IMR-90 (cell line): ENCODE measurements at regions of chr14 and their contacts with region 1.

Region 1: DNA sequence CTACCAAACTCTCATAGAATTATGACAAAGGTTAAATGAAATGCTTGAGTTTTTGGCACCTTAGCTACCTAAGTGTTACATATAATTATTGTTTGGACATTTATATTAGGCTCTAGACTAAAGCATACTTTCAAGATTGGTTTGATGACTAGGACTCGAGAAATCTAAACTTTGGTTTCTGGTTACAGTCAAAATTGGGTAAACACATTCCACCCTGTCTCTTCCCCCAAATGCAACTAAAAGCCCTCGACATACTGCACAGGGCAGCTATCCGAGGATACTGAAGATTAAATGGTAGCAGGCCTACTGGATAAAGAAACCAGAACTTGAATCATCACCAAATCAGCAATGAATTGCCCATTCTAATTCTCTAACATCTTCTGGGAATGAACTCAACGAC is 369.1 kb downstream of the PRKD1 start:
- DNase-seq: peak; percentile 80
- ATAC-seq: peak; percentile 95
- H3K4me3 ChIP-seq: no peak overlapping the region
- H3K27ac ChIP-seq: peak overlapping the region; percentile 98; the same call in 1 of the 2 replicates
- H3K4me1 ChIP-seq: peaks cover 6% of the 10 kb centered on the region
- H3K27me3 ChIP-seq: no peaks in the 10 kb centered on the region
- CTCF ChIP-seq: no peak
- POLR2A ChIP-seq: no peak
- RAD21 ChIP-seq: no peak

Region 2: DNA sequence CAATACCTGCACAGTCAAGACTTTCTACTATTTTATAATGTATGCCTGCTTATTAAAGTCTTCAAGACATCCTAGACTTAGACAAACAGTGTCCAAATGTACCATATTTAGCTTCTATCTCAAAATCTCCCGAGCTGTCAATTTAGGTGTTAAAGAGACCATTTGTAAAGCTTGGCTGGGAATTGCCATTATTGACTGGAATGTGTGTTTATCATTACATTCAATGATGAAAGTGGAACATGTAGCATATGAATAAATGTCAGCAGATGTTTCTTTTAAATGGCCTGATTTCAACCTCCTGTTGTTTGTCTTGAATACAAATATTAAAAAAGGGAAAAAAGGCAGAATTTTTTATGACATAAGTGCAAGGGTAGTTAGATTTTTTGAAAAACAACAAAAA is 203.2 kb before region 1 on chr14:
- CTCF ChIA-PET with region 1: no interaction called
- POLR2A ChIA-PET with region 1: no interaction called
- dilution Hi-C with region 1: no loop called
- in situ Hi-C with region 1: no loop called
- intact Hi-C with region 1: no loop called
- DNase-seq: no peak
- ATAC-seq: no peak
- H3K4me3 ChIP-seq: no peak overlapping the region
- H3K27ac ChIP-seq: no peak overlapping the region
- H3K4me1 ChIP-seq: no peaks in the 10 kb centered on the region
- H3K27me3 ChIP-seq: no peaks in the 10 kb centered on the region
- CTCF ChIP-seq: no peak
- POLR2A ChIP-seq: no peak
- RAD21 ChIP-seq: no peak

Region 3: GRCh38 chr14:29637411-29637810 is 78.9 kb after region 1 on chr14:
- CTCF ChIA-PET with region 1: no interaction called
- POLR2A ChIA-PET with region 1: no interaction called
- dilution Hi-C with region 1: no loop called
- in situ Hi-C with region 1: no loop called
- intact Hi-C with region 1: no loop called
- DNase-seq: peak; percentile 64
- ATAC-seq: peak; percentile 68
- H3K4me3 ChIP-seq: no peak overlapping the region
- H3K27ac ChIP-seq: no peak overlapping the region
- H3K4me1 ChIP-seq: no peaks in the 10 kb centered on the region
- H3K27me3 ChIP-seq: no peaks in the 10 kb centered on the region
- CTCF ChIP-seq: no peak
- POLR2A ChIP-seq: no peak
- RAD21 ChIP-seq: no peak

Region 4: DNA sequence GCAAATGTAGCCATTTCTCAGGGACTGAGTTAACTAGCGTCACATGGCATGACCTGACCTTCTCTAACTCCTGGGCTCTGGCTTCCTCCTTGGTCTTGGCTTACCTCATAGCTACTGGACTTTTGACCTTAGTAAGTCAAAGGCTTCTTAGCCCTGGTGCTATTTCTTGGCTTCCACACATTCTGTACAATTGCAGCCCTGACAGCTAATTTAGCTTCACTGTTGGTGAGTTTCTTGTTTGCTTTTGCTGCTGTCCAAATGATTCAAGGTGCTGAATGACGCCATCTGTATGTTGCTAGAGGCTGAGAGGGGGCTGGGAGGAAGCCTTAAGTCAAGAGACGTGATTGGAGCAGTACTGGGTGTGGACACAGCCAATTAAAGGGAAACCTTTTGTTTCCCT is 166.5 kb after region 1 on chr14:
- CTCF ChIA-PET with region 1: no interaction called
- POLR2A ChIA-PET with region 1: no interaction called
- dilution Hi-C with region 1: no loop called
- in situ Hi-C with region 1: no loop called
- intact Hi-C with region 1: loop called (anchors 10 kb)
- DNase-seq: peak; percentile 63
- ATAC-seq: peak; percentile 75
- H3K4me3 ChIP-seq: no peak overlapping the region
- H3K27ac ChIP-seq: no peak overlapping the region
- H3K4me1 ChIP-seq: peaks cover 10% of the 10 kb centered on the region
- H3K27me3 ChIP-seq: no peaks in the 10 kb centered on the region
- CTCF ChIP-seq: no peak
- POLR2A ChIP-seq: no peak
- RAD21 ChIP-seq: no peak